ENCODE measurements at regions of chrX and their contacts with region 1.

Region 1: DNA sequence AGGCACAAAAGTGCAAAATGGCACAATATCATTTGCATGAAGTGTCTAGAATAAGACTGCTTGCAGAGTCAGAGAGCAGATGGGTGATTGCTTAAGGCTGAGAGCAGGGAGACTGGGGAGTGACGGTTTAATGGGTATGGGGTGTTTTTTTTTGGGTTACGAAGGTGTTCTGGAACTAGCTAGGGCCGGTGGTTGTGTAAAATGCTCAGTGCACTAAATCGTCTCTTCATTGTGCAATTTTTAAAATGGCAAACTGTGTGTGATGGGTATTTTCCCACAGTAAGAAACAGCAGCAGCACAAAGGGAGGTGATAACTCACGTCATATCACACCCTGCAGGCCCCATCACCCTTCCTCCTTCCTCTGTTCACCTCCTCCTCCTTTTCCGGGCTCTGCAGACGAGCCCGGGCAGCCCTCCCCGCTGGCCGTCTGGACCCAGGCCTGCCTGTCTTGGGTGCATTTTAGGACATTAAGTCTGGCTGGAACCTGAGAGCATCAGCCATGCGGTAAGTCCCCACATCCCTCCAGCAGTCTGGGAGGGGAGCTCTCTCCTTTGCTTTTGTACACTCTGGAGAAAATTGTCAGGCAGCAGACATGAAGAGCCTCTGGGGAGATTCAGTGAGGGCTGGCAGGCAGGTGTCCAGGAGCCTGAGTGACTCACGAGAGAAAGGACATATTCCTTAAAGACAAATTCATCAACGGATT is 42.7 kb downstream of the ASMT start:
- DNase-seq: peak; percentile 66
- H3K4me3 ChIP-seq: peak overlapping the region; percentile 70
- H3K27ac ChIP-seq: peak overlapping the region; percentile 59
- H3K4me1 ChIP-seq: peaks cover 29% of the 10 kb centered on the region
- CTCF ChIP-seq: 0 out of 2 replicates have a peak, but pooled peaks have one; percentile 33

Region 2: GRCh38 chrX:1727531-1728027 is 70.1 kb after region 1 on chrX:
- CTCF ChIA-PET with region 1: no interaction called
- POLR2A ChIA-PET with region 1: no interaction called
- intact Hi-C with region 1: no loop called
- DNase-seq: no peak
- H3K4me3 ChIP-seq: no peak overlapping the region
- H3K27ac ChIP-seq: no peak overlapping the region
- H3K4me1 ChIP-seq: no peaks in the 10 kb centered on the region
- CTCF ChIP-seq: no peak

Region 3: GRCh38 chrX:2608638-2609430 is 951.3 kb after region 1 on chrX:
- CTCF ChIA-PET with region 1: no interaction called
- POLR2A ChIA-PET with region 1: no interaction called
- intact Hi-C with region 1: loop called (anchors 5 kb)
- DNase-seq: peak; percentile 85
- H3K4me3 ChIP-seq: peak overlapping the region; percentile 93
- H3K27ac ChIP-seq: peak overlapping the region; percentile 51
- H3K4me1 ChIP-seq: peaks cover 21% of the 10 kb centered on the region
- CTCF ChIP-seq: peak; percentile 41; the same call in 1 of the 2 replicates